ENCODE measurements at regions of chr11 and their contacts with region 1.

Region 1: GRCh38 chr11:93741094-93741881 is at the starts of genes C11orf54 and TAF1D:
- DNase-seq: peak; percentile 91 to 99 (median 96)
- ATAC-seq: peak; percentile 92 to 95 (median 92)
- H3K4me3 ChIP-seq: peak within 1 kb of the TSS; percentile 78 to 95
- H3K4me3 Mint-ChIP-seq: peak within 1 kb of the TSS; percentile 100
- H3K27ac ChIP-seq: peak within 1 kb of the TSS; percentile 93
- H3K27ac Mint-ChIP-seq: peak within 1 kb of the TSS; percentile 100
- H3K4me1 ChIP-seq: peaks cover 22 to 36% of the 10 kb centered on the region in 2 experiments
- H3K4me1 Mint-ChIP-seq: peaks cover 72 to 86% (median 76%) of the 10 kb centered on the region in 3 donors
- H3K27me3 ChIP-seq: no peaks in the 10 kb centered on the region
- H3K27me3 Mint-ChIP-seq: no peaks in the 10 kb centered on the region
- total RNA-seq, gene C11orf54: 15.3 to 30.8 (median 27.4) TPM
- total RNA-seq, gene TAF1D: 130 to 177 (median 152) TPM

Region 2: DNA sequence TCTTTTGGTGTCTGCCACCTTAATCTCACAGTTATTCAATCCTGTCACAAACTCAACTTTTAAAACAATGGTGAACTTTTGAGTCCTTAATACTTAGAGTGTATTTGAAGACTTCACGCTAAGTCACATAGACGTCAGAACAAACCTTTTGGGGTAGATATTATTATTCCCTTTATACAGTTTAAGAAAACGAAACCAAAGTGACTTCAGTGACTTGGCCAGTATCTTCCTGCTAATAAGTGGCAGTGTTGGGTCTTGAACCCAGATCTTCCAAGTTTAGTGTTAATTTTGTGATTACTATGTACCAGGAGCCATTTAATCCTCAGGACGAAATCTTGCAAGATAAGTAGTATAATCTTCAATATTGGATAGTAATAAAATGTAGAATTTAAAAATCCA is 79.1 kb before region 1 on chr11:
- CTCF ChIA-PET with region 1: interaction called in 1 of 2 experiments, 3 read pairs
- POLR2A ChIA-PET with region 1: interaction called, 7 to 18 read pairs
- DNase-seq: no peak
- ATAC-seq: no peak
- H3K4me3 ChIP-seq: peak overlapping the region; percentile 91 to 97
- H3K4me3 Mint-ChIP-seq: peak overlapping the region; percentile 75 to 87 (median 87)
- H3K27ac ChIP-seq: peak overlapping the region; percentile 96
- H3K27ac Mint-ChIP-seq: peak overlapping the region; percentile 83
- H3K4me1 ChIP-seq: peaks cover 2 to 17% of the 10 kb centered on the region in 2 experiments
- H3K4me1 Mint-ChIP-seq: peaks cover 25 to 35% (median 32%) of the 10 kb centered on the region in 3 donors
- H3K27me3 ChIP-seq: no peaks in the 10 kb centered on the region
- H3K27me3 Mint-ChIP-seq: no peaks in the 10 kb centered on the region

Region 3: GRCh38 chr11:93719310-93719709 is 22.0 kb before region 1 on chr11:
- CTCF ChIA-PET with region 1: interaction called in 1 of 2 experiments, 3 read pairs
- POLR2A ChIA-PET with region 1: interaction called, 5 to 11 read pairs
- DNase-seq: no peak
- ATAC-seq: no peak
- H3K4me3 ChIP-seq: no peak overlapping the region
- H3K4me3 Mint-ChIP-seq: no peak overlapping the region
- H3K27ac ChIP-seq: no peak overlapping the region
- H3K27ac Mint-ChIP-seq: no peak overlapping the region
- H3K4me1 ChIP-seq: peaks cover 5 to 11% of the 10 kb centered on the region in 2 experiments
- H3K4me1 Mint-ChIP-seq: peaks cover 15 to 22% (median 19%) of the 10 kb centered on the region in 3 donors
- H3K27me3 ChIP-seq: no peaks in the 10 kb centered on the region
- H3K27me3 Mint-ChIP-seq: no peaks in the 10 kb centered on the region

Region 4: GRCh38 chr11:93730108-93731107 is 10.9 kb before region 1 on chr11:
- CTCF ChIA-PET with region 1: interaction called in 1 of 2 experiments, 3 read pairs
- POLR2A ChIA-PET with region 1: interaction called, 6 to 24 read pairs
- DNase-seq: no peak
- ATAC-seq: no peak
- H3K4me3 ChIP-seq: no peak overlapping the region
- H3K4me3 Mint-ChIP-seq: no peak overlapping the region
- H3K27ac ChIP-seq: no peak overlapping the region
- H3K27ac Mint-ChIP-seq: peak overlapping the region; percentile 55 to 80
- H3K4me1 ChIP-seq: peaks cover 0 to 12% of the 10 kb centered on the region in 2 experiments
- H3K4me1 Mint-ChIP-seq: peaks cover 8 to 30% (median 25%) of the 10 kb centered on the region in 3 donors
- H3K27me3 ChIP-seq: no peaks in the 10 kb centered on the region
- H3K27me3 Mint-ChIP-seq: no peaks in the 10 kb centered on the region

Region 5: GRCh38 chr11:93784152-93784934 is 43.1 kb after region 1 on chr11 and contains the start of gene MED17:
- CTCF ChIA-PET with region 1: interaction called, 9 to 37 read pairs
- POLR2A ChIA-PET with region 1: interaction called, 8 to 41 read pairs
- DNase-seq: peak; percentile 78 to 92 (median 84)
- ATAC-seq: peak; percentile 95 to 98 (median 95)
- H3K4me3 ChIP-seq: peak within 1 kb of the TSS; percentile 80 to 94
- H3K4me3 Mint-ChIP-seq: peak within 1 kb of the TSS; percentile 90 to 99 (median 92)
- H3K27ac ChIP-seq: peak within 1 kb of the TSS; percentile 86
- H3K27ac Mint-ChIP-seq: peak within 1 kb of the TSS; percentile 94 to 98
- H3K4me1 ChIP-seq: peaks cover 19 to 25% of the 10 kb centered on the region in 2 experiments
- H3K4me1 Mint-ChIP-seq: peaks cover 46 to 53% (median 51%) of the 10 kb centered on the region in 3 donors
- H3K27me3 ChIP-seq: no peaks in the 10 kb centered on the region
- H3K27me3 Mint-ChIP-seq: no peaks in the 10 kb centered on the region
- total RNA-seq, gene MED17: 64.1 to 71.7 (median 67.1) TPM

Measured in T-cell (primary cell).